Lower leg skin (tissue), 4 donors: ENCODE measurements at regions of chr11 and their contacts with region 1.

Region 1: GRCh38 chr11:76251576-76251975 is 45.3 kb upstream of the WNT11 start:
- DNase-seq: peak; percentile 42 to 83
- H3K4me3 ChIP-seq: no peak overlapping the region
- CTCF ChIP-seq: no peak
- POLR2A ChIP-seq: no peak

Region 2: GRCh38 chr11:74739546-74740270 is 1511.9 kb before region 1 on chr11:
- intact Hi-C with region 1: no loop called
- DNase-seq: peak in 1 of 2 donors; percentile 84
- H3K4me3 ChIP-seq: no peak overlapping the region
- CTCF ChIP-seq: peak in 1 of 3 donors; percentile 18
- POLR2A ChIP-seq: no peak

Region 3: GRCh38 chr11:76296731-76297542 is 45.4 kb after region 1 on chr11:
- intact Hi-C with region 1: loop called (anchors 2 kb)
- DNase-seq: no peak
- H3K4me3 ChIP-seq: no peak overlapping the region
- CTCF ChIP-seq: no peak
- POLR2A ChIP-seq: no peak